Mammary epithelial cell (primary cell): ENCODE measurements at regions of chrX and their contacts with region 1.

Region 1: DNA sequence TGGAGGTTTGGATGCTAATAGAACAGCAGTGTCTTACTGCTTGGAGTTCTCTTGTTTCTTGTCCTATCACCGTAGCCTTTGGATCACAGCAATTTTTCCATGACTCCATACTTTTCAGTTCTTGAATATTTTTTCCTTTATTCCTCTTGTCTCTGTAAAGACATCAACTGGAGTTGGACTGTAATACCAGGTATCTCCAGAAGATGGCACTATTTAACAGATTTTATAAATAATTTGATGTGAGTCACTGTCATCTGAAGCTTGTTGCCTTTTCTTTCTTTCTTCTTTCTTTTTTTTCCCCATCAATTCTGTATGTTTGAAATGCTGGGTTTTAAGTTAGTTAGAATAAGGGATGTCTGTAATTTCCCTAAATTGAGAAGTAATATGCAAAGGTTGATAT is 24.1 kb downstream of the HPRT1 start:
- DNase-seq: peak; percentile 39
- H3K4me3 ChIP-seq: no peak overlapping the region
- H3K27ac ChIP-seq: no peak overlapping the region
- H3K4me1 ChIP-seq: no peaks in the 10 kb centered on the region
- H3K27me3 ChIP-seq: no peaks in the 10 kb centered on the region
- CTCF ChIP-seq: peak; percentile 51 to 56

Region 2: GRCh38 chrX:134443020-134443419 is 41.0 kb before region 1 on chrX:
- CTCF ChIA-PET with region 1: no interaction called
- dilution Hi-C with region 1: no loop called
- in situ Hi-C with region 1: no loop called
- intact Hi-C with region 1: no loop called
- DNase-seq: no peak
- H3K4me3 ChIP-seq: no peak overlapping the region
- H3K27ac ChIP-seq: no peak overlapping the region
- H3K4me1 ChIP-seq: no peaks in the 10 kb centered on the region
- H3K27me3 ChIP-seq: no peaks in the 10 kb centered on the region
- CTCF ChIP-seq: no peak

Region 3: DNA sequence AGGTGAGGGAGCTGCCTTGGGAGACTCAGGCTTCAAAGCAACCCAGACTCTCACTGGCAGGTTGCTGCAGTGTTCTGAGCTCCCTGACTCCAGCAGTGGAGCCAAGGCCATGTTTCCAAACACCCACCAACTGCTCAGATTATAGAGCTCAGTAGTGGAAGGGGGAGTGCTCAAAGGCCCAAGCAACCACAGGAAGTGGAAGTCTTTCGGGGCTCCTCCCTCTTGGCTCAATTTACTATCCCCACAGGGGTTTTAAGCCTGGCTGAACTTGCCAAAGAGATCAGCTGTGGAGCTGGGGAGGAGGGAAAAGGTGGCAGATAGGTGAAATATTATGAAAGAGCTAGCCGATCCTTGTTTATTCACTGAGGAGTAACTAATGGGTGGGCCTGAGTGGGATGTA is 58.4 kb after region 1 on chrX:
- CTCF ChIA-PET with region 1: no interaction called
- dilution Hi-C with region 1: no loop called
- in situ Hi-C with region 1: no loop called
- intact Hi-C with region 1: no loop called
- DNase-seq: peak; percentile 69
- H3K4me3 ChIP-seq: no peak overlapping the region
- H3K27ac ChIP-seq: no peak overlapping the region
- H3K4me1 ChIP-seq: peaks cover 12% of the 10 kb centered on the region
- H3K27me3 ChIP-seq: no peaks in the 10 kb centered on the region
- CTCF ChIP-seq: no peak

Region 4: GRCh38 chrX:134572816-134573682 is 89.0 kb after region 1 on chrX:
- CTCF ChIA-PET with region 1: no interaction called
- dilution Hi-C with region 1: no loop called
- in situ Hi-C with region 1: no loop called
- intact Hi-C with region 1: no loop called
- DNase-seq: peak; percentile 83
- H3K4me3 ChIP-seq: no peak overlapping the region
- H3K27ac ChIP-seq: no peak overlapping the region
- H3K4me1 ChIP-seq: peaks cover 15% of the 10 kb centered on the region
- H3K27me3 ChIP-seq: no peaks in the 10 kb centered on the region
- CTCF ChIP-seq: no peak

Region 5: DNA sequence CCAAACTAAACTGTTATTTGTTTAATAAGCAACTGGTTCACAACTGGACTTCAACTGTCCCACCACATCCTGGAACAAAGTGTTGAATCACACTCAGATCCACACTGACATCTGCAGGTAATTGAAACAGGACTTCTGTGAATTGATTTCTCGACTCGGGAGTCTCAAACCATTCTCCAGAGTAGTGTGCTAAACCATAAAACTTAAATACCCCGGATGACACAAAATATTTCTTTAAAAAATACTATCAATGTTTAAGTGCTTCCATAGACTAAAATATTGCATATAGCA is 269.6 kb after region 1 on chrX:
- CTCF ChIA-PET with region 1: no interaction called
- dilution Hi-C with region 1: no loop called
- in situ Hi-C with region 1: no loop called
- intact Hi-C with region 1: loop called (anchors 1 kb)
- DNase-seq: peak; percentile 19
- H3K4me3 ChIP-seq: no peak overlapping the region
- H3K27ac ChIP-seq: no peak overlapping the region
- H3K4me1 ChIP-seq: no peaks in the 10 kb centered on the region
- H3K27me3 ChIP-seq: no peaks in the 10 kb centered on the region
- CTCF ChIP-seq: peak; percentile 12 to 26

Region 6: DNA sequence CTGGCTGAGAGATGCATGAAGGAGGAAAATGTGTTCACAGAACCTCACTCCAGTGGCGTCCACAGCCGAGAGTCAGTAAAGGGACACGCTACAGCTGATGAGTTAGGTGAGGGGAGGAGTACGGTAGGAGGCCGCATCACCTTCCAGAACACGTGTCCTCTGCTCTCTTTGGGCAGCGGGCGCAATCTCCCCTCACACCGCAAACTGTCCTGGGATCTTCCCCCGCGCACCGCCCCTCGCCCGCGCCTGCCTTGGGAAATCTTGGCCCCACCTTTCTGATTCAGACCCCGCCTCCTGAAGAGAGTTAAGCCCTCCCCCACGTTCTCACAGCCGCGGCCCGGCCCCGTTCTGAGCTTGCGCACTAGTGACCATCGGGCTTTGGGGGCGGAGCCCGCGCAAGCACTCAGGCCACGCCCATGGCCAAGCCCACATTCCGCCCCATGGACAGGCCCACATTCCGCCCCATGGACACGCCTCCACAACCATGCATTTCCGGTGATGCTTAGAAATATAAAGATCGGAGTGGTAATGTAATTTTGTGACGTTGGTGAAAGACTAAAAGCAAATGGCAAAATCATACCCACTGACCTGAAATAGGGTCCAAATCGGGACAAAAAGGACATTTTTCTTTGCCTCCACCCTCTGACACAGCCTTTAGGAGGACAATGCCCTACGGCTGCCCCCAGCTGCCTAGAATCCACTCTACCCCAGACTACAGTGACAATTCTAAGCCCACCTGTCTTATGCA is 520.0 kb after region 1 on chrX:
- CTCF ChIA-PET with region 1: no interaction called
- dilution Hi-C with region 1: no loop called
- in situ Hi-C with region 1: loop called in 1 of 2 experiments (anchors 25 kb)
- intact Hi-C with region 1: loop called (anchors 1 kb)
- DNase-seq: peak; percentile 81
- H3K4me3 ChIP-seq: peak overlapping the region; percentile 38 to 56 (median 47)
- H3K27ac ChIP-seq: peak overlapping the region; percentile 52
- H3K4me1 ChIP-seq: no peaks in the 10 kb centered on the region
- H3K27me3 ChIP-seq: no peaks in the 10 kb centered on the region
- CTCF ChIP-seq: no peak

Region 7: DNA sequence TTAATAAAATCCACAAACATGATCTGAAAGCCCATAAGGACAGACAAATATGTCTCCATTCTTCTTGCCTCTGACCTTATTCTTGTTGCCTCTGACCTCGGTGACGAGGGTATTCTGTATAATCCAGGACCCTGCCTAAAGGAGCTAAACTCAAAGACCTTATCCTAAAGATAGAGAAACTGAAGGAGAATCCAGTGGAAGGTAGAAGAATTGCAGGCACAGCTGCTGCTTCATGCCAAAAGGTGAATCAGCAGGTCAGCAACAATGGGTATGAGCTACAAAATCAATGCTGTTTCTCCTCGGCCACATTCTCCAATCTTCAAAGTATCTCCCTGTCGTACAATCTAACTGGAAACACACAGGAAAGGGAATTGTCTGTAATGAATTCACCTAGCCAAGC is 1107.8 kb after region 1 on chrX:
- CTCF ChIA-PET with region 1: no interaction called
- dilution Hi-C with region 1: no loop called
- in situ Hi-C with region 1: no loop called
- intact Hi-C with region 1: no loop called
- DNase-seq: no peak
- H3K4me3 ChIP-seq: no peak overlapping the region
- H3K27ac ChIP-seq: no peak overlapping the region
- H3K4me1 ChIP-seq: no peaks in the 10 kb centered on the region
- H3K27me3 ChIP-seq: no peaks in the 10 kb centered on the region
- CTCF ChIP-seq: peak in 1 of 2 donors; percentile 28